ENCODE measurements at regions of chrX and their contacts with region 1.

Region 1: GRCh38 chrX:65581661-65582339 is 47.2 kb upstream of the LAS1L start:
- DNase-seq: peak; percentile 51
- H3K4me3 ChIP-seq: no peak overlapping the region
- H3K27ac ChIP-seq: no peak overlapping the region
- H3K4me1 ChIP-seq: no peaks in the 10 kb centered on the region
- H3K27me3 ChIP-seq: no peaks in the 10 kb centered on the region
- CTCF ChIP-seq: peak; percentile 54 to 60
- POLR2A ChIP-seq: no peak

Region 2: DNA sequence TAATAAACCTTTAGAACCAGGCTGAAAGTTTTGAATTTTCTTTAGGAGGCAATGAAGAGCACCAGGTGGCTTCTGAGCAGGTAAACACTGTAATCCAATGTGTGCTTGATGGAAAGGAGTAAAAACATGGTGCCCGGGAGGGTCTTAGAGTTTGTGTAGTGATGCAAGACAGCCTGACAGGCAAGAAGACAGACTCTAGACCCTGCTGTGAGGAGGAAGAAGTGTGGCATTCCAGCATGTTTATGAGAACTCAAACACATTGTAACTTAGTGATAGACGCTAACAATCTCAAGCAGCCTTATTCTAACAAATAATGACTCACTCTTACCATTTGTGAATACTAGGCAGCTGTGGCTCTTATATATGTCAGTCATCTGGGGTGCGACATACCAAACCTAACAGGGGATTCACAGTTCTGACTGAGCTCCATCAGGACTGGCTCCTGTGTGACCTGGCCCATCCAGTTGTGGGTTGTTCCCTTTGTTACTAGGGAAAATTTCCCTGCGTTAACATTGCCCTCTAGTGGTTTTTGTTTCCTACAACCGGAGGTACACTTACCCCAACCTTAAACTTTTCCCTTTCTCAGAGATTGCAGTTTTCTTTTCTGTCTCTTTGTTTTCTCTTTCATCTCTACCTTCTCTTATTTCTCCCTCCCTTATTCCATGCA is 404.3 kb after region 1 on chrX:
- CTCF ChIA-PET with region 1: interaction called, 61 read pairs
- POLR2A ChIA-PET with region 1: no interaction called
- dilution Hi-C with region 1: no loop called
- intact Hi-C with region 1: loop called (anchors 1 kb)
- DNase-seq: peak; percentile 49
- H3K4me3 ChIP-seq: no peak overlapping the region
- H3K27ac ChIP-seq: no peak overlapping the region
- H3K4me1 ChIP-seq: no peaks in the 10 kb centered on the region
- H3K27me3 ChIP-seq: no peaks in the 10 kb centered on the region
- CTCF ChIP-seq: peak; percentile 16 to 25
- POLR2A ChIP-seq: no peak

Region 3: DNA sequence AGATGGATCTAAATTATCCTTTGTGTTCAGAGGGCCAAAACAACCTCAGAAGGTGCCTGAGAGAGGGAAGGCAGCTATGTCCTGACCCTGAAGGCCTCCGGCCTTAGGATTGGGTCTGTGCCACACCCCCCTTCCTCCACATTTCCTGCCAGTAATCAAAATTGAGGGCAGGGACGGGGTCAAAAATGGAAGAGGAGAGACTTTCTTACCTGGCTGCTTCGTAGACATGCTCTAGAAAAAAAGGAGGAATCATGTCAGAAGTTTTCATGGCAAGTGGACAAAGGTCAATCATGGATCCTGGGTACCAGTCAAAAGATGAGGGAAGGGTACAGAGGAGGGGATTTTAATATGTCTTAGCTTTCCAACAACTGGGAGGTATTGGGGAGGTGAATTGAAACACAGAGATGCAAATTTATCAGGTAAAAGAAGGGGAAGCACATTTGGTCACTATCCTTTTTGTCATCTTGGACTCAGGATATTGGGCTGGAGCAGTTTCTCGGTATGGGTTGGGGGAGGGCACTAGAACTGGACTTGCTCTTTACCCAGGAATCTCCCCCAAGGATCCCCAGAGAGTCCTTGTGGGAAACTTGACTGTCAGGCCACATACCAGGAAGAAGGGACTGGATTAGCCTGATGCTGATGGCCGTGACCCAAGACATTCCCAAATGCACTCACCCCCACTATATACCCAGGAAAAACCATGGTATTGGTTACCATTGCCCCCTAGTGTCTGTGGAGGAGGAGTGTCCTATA is 441.0 kb after region 1 on chrX:
- CTCF ChIA-PET with region 1: interaction called, 3 read pairs
- POLR2A ChIA-PET with region 1: no interaction called
- dilution Hi-C with region 1: no loop called
- intact Hi-C with region 1: loop called (anchors 1 kb)
- DNase-seq: no peak
- H3K4me3 ChIP-seq: no peak overlapping the region
- H3K27ac ChIP-seq: no peak overlapping the region
- H3K4me1 ChIP-seq: no peaks in the 10 kb centered on the region
- H3K27me3 ChIP-seq: no peaks in the 10 kb centered on the region
- CTCF ChIP-seq: no peak
- POLR2A ChIP-seq: no peak

Region 4: DNA sequence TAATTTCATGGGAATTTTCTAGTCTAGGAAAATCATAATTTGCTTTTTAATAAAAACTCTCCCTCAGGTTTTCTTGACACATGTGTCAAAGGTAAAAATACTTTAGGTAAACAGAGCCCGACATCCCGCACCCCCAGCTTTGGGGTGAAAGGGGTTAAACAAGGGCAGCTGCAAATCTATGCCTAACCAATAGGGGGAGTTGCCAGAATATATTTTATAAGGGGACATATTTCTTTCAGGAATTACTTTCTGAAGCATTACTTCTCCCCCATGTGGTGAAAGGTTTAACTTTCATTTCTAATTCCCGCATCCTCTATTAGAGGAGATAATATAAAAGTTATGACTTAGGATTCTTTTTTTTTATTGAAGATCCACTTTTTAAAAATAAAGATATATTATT is 528.3 kb after region 1 on chrX:
- CTCF ChIA-PET with region 1: interaction called, 4 read pairs
- POLR2A ChIA-PET with region 1: no interaction called
- dilution Hi-C with region 1: no loop called
- intact Hi-C with region 1: loop called (anchors 1 kb)
- DNase-seq: peak; percentile 1
- H3K4me3 ChIP-seq: no peak overlapping the region
- H3K27ac ChIP-seq: no peak overlapping the region
- H3K4me1 ChIP-seq: no peaks in the 10 kb centered on the region
- H3K27me3 ChIP-seq: no peaks in the 10 kb centered on the region
- CTCF ChIP-seq: peak; percentile 19 to 27
- POLR2A ChIP-seq: no peak

Region 5: DNA sequence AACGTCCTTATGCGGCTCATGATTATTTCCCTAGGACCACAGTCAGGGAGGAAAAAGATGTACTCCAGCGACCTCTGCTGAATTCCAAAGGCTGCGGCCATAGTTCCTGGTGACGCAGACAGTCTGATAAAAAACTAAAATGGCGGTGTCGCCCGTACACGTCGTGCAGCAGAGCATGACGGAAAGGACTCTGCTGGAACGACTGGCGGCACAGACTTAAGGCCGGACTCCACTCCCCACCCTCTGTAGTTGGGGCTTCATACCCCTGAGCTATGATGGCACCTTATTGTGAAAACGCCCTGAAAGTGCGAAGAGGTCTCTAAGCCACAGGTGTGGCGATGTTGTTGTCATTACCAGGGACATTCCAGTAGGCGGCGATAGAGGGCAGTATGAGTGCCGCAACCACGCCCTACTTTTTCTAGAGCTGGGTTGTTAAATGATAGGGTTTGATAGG is 1147.0 kb after region 1 on chrX:
- CTCF ChIA-PET with region 1: interaction called, 11 read pairs
- POLR2A ChIA-PET with region 1: no interaction called
- dilution Hi-C with region 1: no loop called
- intact Hi-C with region 1: loop called (anchors 1 kb)
- DNase-seq: peak; percentile 39
- H3K4me3 ChIP-seq: peak overlapping the region; percentile 28 to 74 (median 40)
- H3K27ac ChIP-seq: peak overlapping the region; percentile 22
- H3K4me1 ChIP-seq: no peaks in the 10 kb centered on the region
- H3K27me3 ChIP-seq: no peaks in the 10 kb centered on the region
- CTCF ChIP-seq: peak; percentile 45 to 55
- POLR2A ChIP-seq: no peak